ENCODE measurements at regions of chr20 and their contacts with region 1.

Region 1: DNA sequence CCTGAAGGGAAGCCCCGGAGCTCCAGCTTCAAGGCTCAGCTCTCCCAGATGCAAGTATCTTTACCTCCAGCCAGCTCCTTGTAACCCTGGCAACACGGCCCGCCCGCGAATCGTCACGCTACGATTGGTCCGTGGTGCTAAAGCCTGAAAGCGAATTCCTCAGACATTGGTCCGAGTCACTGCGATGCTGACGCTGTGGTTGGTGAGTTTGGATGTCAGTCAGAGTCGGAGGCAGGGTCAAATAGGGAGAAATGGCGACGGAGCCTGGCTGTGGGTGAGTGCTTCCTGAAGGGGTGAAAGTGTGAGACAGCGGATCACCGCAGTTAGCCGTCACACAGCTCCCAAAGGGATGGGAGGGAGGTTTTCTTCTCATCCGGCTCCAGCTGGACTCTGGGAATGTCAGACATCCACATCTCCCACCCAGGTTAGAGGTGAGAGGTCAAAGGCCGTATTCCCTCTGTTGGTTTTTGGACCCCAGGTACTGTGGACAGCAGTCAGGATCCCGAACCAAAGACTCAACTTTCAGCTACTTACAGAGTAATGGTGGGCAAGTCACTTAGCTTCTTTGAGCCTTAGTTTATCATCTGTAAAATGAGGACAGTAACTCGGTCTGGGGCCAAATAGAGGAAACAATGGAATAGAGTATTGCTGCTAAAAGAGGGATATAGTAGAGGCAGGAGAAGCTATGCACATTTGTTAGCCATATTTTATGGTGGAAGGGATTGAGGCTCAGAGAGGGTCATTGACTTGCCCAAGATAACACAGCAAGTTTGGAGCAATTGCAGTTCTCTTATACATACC is at the start of gene ZSWIM1:
- DNase-seq: peak; percentile 98
- ATAC-seq: peak; percentile 99
- H3K4me3 Mint-ChIP-seq: peak within 1 kb of the TSS; percentile 90
- H3K27ac Mint-ChIP-seq: peak within 1 kb of the TSS; percentile 93
- H3K4me1 Mint-ChIP-seq: peaks cover 34% of the 10 kb centered on the region
- H3K27me3 Mint-ChIP-seq: no peaks in the 10 kb centered on the region
- CTCF ChIP-seq: no peak
- total RNA-seq, gene ZSWIM1: 13.9 and 15.1 TPM in 2 replicates

Region 2: DNA sequence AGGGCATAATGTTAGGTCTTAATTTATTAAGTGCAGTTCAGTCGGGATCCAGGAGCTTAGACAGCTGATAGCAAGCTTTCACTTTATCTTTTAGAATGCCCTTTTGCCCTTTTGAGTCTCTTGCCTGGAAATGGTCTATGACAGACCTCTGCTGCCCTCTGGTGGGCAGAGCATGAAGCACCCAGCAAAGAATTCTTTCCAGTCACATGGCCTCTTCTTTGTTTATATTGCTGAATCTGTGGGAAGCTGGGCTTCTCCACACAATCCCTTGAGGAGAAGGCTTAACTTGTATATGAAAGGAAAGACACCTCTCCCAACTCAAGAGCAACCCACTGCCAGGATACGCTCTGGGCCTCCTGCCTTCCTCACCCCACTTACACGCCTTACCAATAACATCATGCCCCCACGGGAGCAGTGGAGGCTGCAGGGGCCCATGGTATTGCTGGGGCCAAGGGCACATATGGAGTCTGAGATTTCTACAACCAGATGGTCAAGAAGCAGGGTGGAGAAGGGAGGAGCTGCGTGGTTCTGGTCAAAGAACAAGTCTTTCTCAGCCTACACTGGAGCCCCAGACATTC is 109.9 kb before region 1 on chr20:
- CTCF ChIA-PET with region 1: no interaction called
- POLR2A ChIA-PET with region 1: no interaction called
- intact Hi-C with region 1: no loop called
- DNase-seq: peak; percentile 65
- ATAC-seq: peak; percentile 71
- H3K4me3 Mint-ChIP-seq: no peak overlapping the region
- H3K27ac Mint-ChIP-seq: no peak overlapping the region
- H3K4me1 Mint-ChIP-seq: peaks cover 5% of the 10 kb centered on the region
- H3K27me3 Mint-ChIP-seq: peaks cover 16% of the 10 kb centered on the region
- CTCF ChIP-seq: peak; percentile 20

Region 3: DNA sequence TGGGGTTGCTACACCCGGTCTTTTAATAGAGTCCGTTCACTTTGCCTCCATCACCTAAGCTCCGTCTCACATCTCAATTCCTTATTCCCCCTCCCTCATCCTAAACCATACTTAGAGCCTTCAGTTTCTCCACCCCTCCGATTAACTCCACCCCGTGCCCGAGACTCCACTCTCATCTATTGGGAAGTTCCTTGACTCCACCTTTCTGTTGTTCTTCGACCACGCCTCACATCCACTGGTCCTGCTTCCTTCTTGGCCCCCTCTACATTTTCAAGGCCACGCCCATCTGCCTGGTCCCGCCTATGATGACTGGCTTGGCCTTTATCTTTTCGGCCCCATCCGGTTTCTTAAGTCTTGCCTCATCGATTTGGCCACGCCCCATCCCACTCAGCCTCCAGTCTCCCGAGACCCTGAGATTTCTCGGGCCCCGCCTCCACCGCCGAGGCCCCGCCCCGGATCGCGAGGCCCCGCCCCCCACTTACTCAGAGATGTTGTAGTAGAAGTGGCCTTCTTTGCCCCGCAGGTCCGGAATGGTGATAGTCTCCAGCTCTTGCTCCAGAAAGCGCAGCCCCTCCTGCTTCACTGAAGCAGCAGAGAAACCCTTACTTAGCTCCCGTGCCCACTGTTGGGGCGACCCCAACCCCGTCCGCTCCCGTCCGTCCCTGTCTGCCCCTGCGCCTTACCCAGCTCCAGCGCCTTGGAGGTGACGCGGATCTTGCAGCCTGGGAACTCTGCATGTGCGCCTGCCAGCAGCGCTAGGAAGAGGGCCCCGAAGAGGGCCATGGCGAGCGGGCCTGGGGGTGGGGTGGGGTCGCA is 29.7 kb after region 1 on chr20:
- CTCF ChIA-PET with region 1: no interaction called
- POLR2A ChIA-PET with region 1: interaction called, 5 read pairs
- intact Hi-C with region 1: loop called (anchors 1 kb)
- DNase-seq: peak; percentile 97
- ATAC-seq: peak; percentile 92
- H3K4me3 Mint-ChIP-seq: peak overlapping the region; percentile 90
- H3K27ac Mint-ChIP-seq: peak overlapping the region; percentile 83
- H3K4me1 Mint-ChIP-seq: peaks cover 31% of the 10 kb centered on the region
- H3K27me3 Mint-ChIP-seq: peaks cover 6% of the 10 kb centered on the region
- CTCF ChIP-seq: no peak

Measured in activated B cell treated with CpG ODN at 0.5 μM for 24 hours (primary cell).